Mammary epithelial cell (primary cell): ENCODE measurements at regions of chr12 and their contacts with region 1.

Region 1: GRCh38 chr12:55926738-55927587 is 731 bp downstream of the PYM1 start:
- DNase-seq: peak; percentile 91
- H3K4me3 ChIP-seq: peak overlapping the region; percentile 70 to 92 (median 77)
- H3K27ac ChIP-seq: peak overlapping the region; percentile 83
- H3K4me1 ChIP-seq: peaks cover 41% of the 10 kb centered on the region
- H3K27me3 ChIP-seq: no peaks in the 10 kb centered on the region
- CTCF ChIP-seq: peak; percentile 41 to 82

Region 2: DNA sequence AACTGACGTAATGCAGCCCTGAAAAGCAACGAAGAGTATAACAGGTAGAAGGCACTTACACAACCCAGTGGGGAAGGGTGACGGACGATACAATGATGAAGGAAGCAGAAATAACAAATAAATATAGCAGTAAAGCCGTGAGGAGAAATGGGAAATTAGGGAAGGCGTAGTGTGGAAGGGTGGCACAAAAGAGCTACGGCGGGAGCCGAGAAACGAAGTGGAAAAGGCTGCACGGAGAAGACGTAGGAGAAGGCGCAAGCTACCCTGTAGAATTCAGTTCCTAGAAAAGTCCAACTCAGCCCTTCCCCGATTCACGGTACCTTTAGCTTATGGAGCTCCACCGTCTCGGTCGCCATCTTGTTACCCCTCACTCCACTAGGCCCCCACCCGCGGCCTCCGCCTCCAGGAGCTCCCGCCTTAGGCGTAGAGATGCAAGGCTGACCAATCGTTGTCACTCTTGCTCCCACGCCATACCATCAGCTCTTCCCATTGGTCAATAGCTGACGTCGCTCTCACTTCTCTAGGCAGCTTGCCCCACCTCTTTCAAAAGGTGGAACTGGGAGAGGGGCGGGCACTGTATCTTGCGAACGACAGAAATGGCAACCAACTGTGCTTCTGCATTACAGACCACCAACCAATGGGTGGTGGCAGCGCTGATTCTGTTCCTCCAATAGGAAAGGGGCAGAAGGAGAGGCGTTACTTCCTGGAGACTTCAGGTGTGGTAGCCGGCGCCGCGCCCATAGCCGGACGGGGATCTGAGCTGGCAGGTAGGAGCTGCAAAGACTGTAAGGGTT is 109.4 kb before region 1 on chr12 and contains the starts of genes ORMDL2 and SARNP:
- CTCF ChIA-PET with region 1: interaction called, 10 read pairs
- dilution Hi-C with region 1: loop called (anchors 5 kb)
- in situ Hi-C with region 1: loop called in 1 of 2 experiments (anchors 10 kb)
- intact Hi-C with region 1: loop called (anchors 1 kb)
- DNase-seq: peak; percentile 100
- H3K4me3 ChIP-seq: peak within 1 kb of the TSS; percentile 76 to 95 (median 90)
- H3K27ac ChIP-seq: peak within 1 kb of the TSS; percentile 93
- H3K4me1 ChIP-seq: peaks cover 18% of the 10 kb centered on the region
- H3K27me3 ChIP-seq: no peaks in the 10 kb centered on the region
- CTCF ChIP-seq: no peak
- total RNA-seq, gene ORMDL2: 24.3 to 91.3 TPM
- total RNA-seq, gene SARNP: 34.7 to 72.9 TPM

Region 3: DNA sequence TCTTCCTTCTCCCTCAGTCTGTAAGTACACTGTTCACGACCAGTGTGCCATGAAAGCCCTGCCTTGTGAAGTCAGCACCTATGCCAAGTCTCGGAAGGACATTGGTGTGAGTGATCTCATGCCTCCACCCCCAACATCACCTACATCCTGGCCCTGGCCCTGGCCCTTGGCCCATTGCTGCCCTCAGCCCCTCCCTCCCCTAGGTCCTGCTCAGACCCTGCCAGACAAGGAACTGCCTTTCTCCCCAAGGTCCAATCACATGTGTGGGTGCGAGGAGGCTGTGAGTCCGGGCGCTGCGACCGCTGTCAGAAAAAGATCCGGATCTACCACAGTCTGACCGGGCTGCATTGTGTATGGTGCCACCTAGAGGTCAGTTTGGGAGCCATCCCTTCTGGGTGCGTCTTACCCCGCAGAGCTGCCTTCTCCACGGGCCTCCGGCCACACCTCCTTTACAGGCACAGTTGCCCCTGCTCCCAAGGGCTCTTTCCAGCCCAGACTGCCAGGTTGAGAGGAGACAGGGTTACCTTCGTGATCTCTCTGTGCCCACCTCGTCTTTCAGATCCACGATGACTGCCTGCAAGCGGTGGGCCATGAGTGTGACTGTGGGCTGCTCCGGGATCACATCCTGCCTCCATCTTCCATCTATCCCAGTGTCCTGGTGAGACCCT is 13.2 kb after region 1 on chr12:
- CTCF ChIA-PET with region 1: interaction called, 11 read pairs
- dilution Hi-C with region 1: no loop called
- in situ Hi-C with region 1: no loop called
- intact Hi-C with region 1: loop called (anchors 1 kb)
- DNase-seq: peak; percentile 82
- H3K4me3 ChIP-seq: no peak overlapping the region
- H3K27ac ChIP-seq: peak overlapping the region; percentile 97
- H3K4me1 ChIP-seq: peaks cover 48% of the 10 kb centered on the region
- H3K27me3 ChIP-seq: no peaks in the 10 kb centered on the region
- CTCF ChIP-seq: peak; percentile 88 to 94

Region 4: GRCh38 chr12:55996715-55997534 is 70.0 kb after region 1 on chr12 and contains the start of gene SUOX:
- CTCF ChIA-PET with region 1: no interaction called
- dilution Hi-C with region 1: loop called (anchors 10 kb)
- in situ Hi-C with region 1: no loop called
- intact Hi-C with region 1: no loop called
- DNase-seq: peak; percentile 96
- H3K4me3 ChIP-seq: peak within 1 kb of the TSS; percentile 67 to 82 (median 75)
- H3K27ac ChIP-seq: peak within 1 kb of the TSS; percentile 63
- H3K4me1 ChIP-seq: peaks cover 11% of the 10 kb centered on the region
- H3K27me3 ChIP-seq: no peaks in the 10 kb centered on the region
- CTCF ChIP-seq: no peak
- total RNA-seq, gene SUOX: 10.7 to 14.7 TPM